ENCODE measurements at regions of chr1 and their contacts with region 1.

Region 1: DNA sequence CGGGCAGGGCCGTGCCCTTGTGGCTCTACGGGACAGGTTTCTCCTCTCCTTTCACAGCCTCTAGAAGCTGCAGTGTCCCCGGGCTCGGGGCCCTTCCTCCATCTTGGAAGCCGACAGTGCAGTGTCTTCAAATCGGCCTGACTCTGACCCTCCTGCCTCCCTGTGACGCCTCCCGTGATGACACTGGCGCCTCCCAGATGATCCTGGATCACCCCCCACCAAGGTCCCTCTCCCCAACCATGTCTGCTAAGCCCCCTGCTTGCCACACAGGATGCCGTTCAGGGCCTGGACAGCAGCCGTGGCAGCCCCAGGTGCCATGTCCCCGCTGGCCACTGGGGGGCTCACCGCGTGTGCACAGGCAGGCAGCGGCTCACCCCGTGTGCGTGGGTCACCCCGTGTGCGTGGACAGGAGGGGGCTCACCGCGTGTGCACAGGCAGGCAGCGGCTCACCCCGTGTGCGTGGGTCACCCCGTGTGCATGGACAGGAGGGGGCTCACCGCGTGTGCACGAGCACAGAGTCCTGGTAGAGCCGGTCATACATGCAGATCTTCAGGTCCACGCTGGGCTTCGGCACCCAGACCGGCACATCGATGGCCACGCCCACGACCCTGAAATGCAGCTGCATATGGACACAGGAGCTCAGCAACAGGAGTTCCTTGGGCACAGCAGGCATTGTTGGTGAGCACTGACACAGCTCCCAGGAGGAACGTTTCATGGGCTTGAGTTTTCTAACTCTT is 24.9 kb upstream of the TMEM52 start:
- DNase-seq: no peak
- ATAC-seq: peak; percentile 99
- H3K4me3 ChIP-seq: no peak overlapping the region
- H3K27ac ChIP-seq: no peak overlapping the region
- H3K4me1 ChIP-seq: no peaks in the 10 kb centered on the region
- H3K27me3 ChIP-seq: peaks cover 34% of the 10 kb centered on the region
- CTCF ChIP-seq: peak; percentile 62
- POLR2A ChIP-seq: no peak
- RAD21 ChIP-seq: peak; percentile 56

Region 2: GRCh38 chr1:1550591-1551432 is 393.2 kb before region 1 on chr1:
- CTCF ChIA-PET with region 1: no interaction called
- POLR2A ChIA-PET with region 1: no interaction called
- dilution Hi-C with region 1: no loop called
- in situ Hi-C with region 1: no loop called
- intact Hi-C with region 1: no loop called
- DNase-seq: peak; percentile 36
- ATAC-seq: peak; percentile 18; the same call in 1 of the 2 replicates
- H3K4me3 ChIP-seq: no peak overlapping the region
- H3K27ac ChIP-seq: no peak overlapping the region
- H3K4me1 ChIP-seq: peaks cover 8% of the 10 kb centered on the region; the same call in 1 of the 2 replicates
- H3K27me3 ChIP-seq: no peaks in the 10 kb centered on the region
- CTCF ChIP-seq: peak; percentile 43
- POLR2A ChIP-seq: no peak
- RAD21 ChIP-seq: 0 out of 2 replicates have a peak, but pooled peaks have one; percentile 10

Region 3: GRCh38 chr1:1919304-1920056 is 24.5 kb before region 1 on chr1:
- CTCF ChIA-PET with region 1: no interaction called
- POLR2A ChIA-PET with region 1: no interaction called
- dilution Hi-C with region 1: no loop called
- in situ Hi-C with region 1: no loop called
- intact Hi-C with region 1: no loop called
- DNase-seq: peak; percentile 92
- ATAC-seq: peak; percentile 97
- H3K4me3 ChIP-seq: peak overlapping the region; percentile 40; the same call in 1 of the 2 replicates
- H3K27ac ChIP-seq: no peak overlapping the region
- H3K4me1 ChIP-seq: peaks cover 2% of the 10 kb centered on the region; the same call in 1 of the 2 replicates
- H3K27me3 ChIP-seq: peaks cover 4% of the 10 kb centered on the region; the same call in 1 of the 2 replicates
- CTCF ChIP-seq: no peak
- POLR2A ChIP-seq: no peak
- RAD21 ChIP-seq: no peak

Region 4: GRCh38 chr1:1959840-1960479 is 16.0 kb after region 1 on chr1:
- CTCF ChIA-PET with region 1: no interaction called
- POLR2A ChIA-PET with region 1: no interaction called
- dilution Hi-C with region 1: no loop called
- in situ Hi-C with region 1: no loop called
- intact Hi-C with region 1: no loop called
- DNase-seq: peak; percentile 51
- ATAC-seq: peak; percentile 95
- H3K4me3 ChIP-seq: no peak overlapping the region
- H3K27ac ChIP-seq: no peak overlapping the region
- H3K4me1 ChIP-seq: peaks cover 2% of the 10 kb centered on the region; the same call in 1 of the 2 replicates
- H3K27me3 ChIP-seq: peaks cover 35% of the 10 kb centered on the region
- CTCF ChIP-seq: peak; percentile 66
- POLR2A ChIP-seq: no peak
- RAD21 ChIP-seq: peak; percentile 62

Region 5: GRCh38 chr1:1974834-1975233 is 30.8 kb after region 1 on chr1:
- CTCF ChIA-PET with region 1: no interaction called
- POLR2A ChIA-PET with region 1: no interaction called
- dilution Hi-C with region 1: no loop called
- in situ Hi-C with region 1: no loop called
- intact Hi-C with region 1: no loop called
- DNase-seq: no peak
- ATAC-seq: no peak
- H3K4me3 ChIP-seq: no peak overlapping the region
- H3K27ac ChIP-seq: no peak overlapping the region
- H3K4me1 ChIP-seq: no peaks in the 10 kb centered on the region
- H3K27me3 ChIP-seq: peaks cover 17% of the 10 kb centered on the region; the same call in 1 of the 2 replicates
- CTCF ChIP-seq: no peak
- POLR2A ChIP-seq: no peak
- RAD21 ChIP-seq: no peak

Region 6: GRCh38 chr1:2044510-2045319 is 100.7 kb after region 1 on chr1:
- CTCF ChIA-PET with region 1: interaction called, 10 read pairs
- POLR2A ChIA-PET with region 1: no interaction called
- dilution Hi-C with region 1: no loop called
- in situ Hi-C with region 1: no loop called
- intact Hi-C with region 1: loop called (anchors 1 kb)
- DNase-seq: peak; percentile 4
- ATAC-seq: peak; percentile 98
- H3K4me3 ChIP-seq: no peak overlapping the region; the same call in 1 of the 2 replicates
- H3K27ac ChIP-seq: no peak overlapping the region
- H3K4me1 ChIP-seq: peaks cover 2% of the 10 kb centered on the region; the same call in 1 of the 2 replicates
- H3K27me3 ChIP-seq: peaks cover 46% of the 10 kb centered on the region
- CTCF ChIP-seq: peak; percentile 82
- POLR2A ChIP-seq: no peak
- RAD21 ChIP-seq: peak; percentile 74

Measured in IMR-90 (cell line).